A549 (cell line): ENCODE measurements at regions of chr5 and their contacts with region 1.

Region 1: GRCh38 chr5:141878711-141879425 is 658 bp upstream of the PCDH1 start:
- DNase-seq: peak; percentile 74 to 91
- ATAC-seq: peak; percentile 65 to 89
- H3K4me3 ChIP-seq: peak overlapping the region; percentile 64
- H3K27ac ChIP-seq: peak overlapping the region; percentile 41 to 83; a peak in 4 of 6 replicates
- H3K4me1 ChIP-seq: peaks cover 22% of the 10 kb centered on the region
- CTCF ChIP-seq: peak; percentile 97
- EP300 ChIP-seq: no peak
- POLR2A ChIP-seq: no peak
- RAD21 ChIP-seq: peak; percentile 94

Region 2: GRCh38 chr5:141691867-141692532 is 186.9 kb before region 1 on chr5:
- CTCF ChIA-PET with region 1: interaction called, 424 read pairs
- POLR2A ChIA-PET with region 1: no interaction called
- DNase-seq: peak; percentile 71 to 74
- ATAC-seq: peak; percentile 91 to 96
- H3K4me3 ChIP-seq: peak overlapping the region; percentile 38
- H3K27ac ChIP-seq: peak overlapping the region in 1 of 2 experiments; percentile 57; a peak in 2 of 6 replicates
- H3K4me1 ChIP-seq: peaks cover 2% of the 10 kb centered on the region; the same call in 1 of the 3 replicates
- CTCF ChIP-seq: peak; percentile 98
- EP300 ChIP-seq: no peak
- POLR2A ChIP-seq: no peak
- RAD21 ChIP-seq: peak; percentile 95 to 99

Region 3: DNA sequence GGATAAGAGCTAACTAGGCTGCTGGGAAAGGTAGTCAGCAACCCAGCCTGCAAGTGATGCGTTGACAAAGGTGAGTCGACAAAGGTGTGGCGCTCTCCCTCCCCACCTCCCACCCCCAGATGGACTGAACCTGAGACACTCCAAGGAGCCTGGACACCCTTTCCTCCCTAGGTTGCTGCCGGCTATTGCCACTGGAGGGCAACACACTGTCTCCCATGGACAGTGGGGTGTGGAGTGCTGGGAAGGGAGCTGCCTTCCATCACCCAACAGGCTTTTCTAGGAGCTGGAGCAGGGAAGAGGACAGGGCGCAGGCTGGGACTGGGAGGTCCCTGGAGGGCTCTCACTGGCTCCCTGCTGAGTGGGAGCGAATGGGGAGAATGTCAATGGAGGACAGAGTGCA is 121.5 kb before region 1 on chr5:
- CTCF ChIA-PET with region 1: interaction called, 92 read pairs
- POLR2A ChIA-PET with region 1: no interaction called
- DNase-seq: peak; percentile 54 to 72
- ATAC-seq: peak; percentile 71 to 91
- H3K4me3 ChIP-seq: no peak overlapping the region
- H3K27ac ChIP-seq: no peak overlapping the region
- H3K4me1 ChIP-seq: no peaks in the 10 kb centered on the region
- CTCF ChIP-seq: peak; percentile 35; the same call in 2 of the 3 replicates
- EP300 ChIP-seq: no peak
- POLR2A ChIP-seq: no peak
- RAD21 ChIP-seq: peak; percentile 48 to 63; a peak in 3 of 5 replicates

Region 4: DNA sequence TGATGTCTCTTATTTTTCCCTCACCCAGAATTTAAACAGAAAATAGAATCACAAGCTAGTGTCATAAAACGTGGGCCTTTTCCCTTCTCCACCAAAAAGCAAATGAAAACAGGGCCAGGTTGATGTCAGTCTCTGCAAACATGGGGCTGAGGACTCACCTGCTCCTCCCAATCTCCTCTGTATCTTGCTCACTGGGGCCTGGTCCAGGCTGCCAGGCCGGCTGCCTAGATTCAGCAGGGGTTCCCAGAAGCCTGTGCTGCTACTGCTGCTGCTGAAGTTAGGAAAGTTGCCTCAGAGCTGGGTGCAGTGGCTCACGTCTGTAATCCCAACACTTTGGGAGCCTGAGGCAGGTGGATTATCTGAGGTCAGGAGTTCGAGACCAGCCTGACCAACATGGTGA is 85.0 kb before region 1 on chr5:
- CTCF ChIA-PET with region 1: interaction called, 10 read pairs
- POLR2A ChIA-PET with region 1: no interaction called
- DNase-seq: no peak
- ATAC-seq: no peak
- H3K4me3 ChIP-seq: no peak overlapping the region
- H3K27ac ChIP-seq: no peak overlapping the region
- H3K4me1 ChIP-seq: no peaks in the 10 kb centered on the region
- CTCF ChIP-seq: no peak
- EP300 ChIP-seq: no peak
- POLR2A ChIP-seq: no peak
- RAD21 ChIP-seq: no peak

Region 5: DNA sequence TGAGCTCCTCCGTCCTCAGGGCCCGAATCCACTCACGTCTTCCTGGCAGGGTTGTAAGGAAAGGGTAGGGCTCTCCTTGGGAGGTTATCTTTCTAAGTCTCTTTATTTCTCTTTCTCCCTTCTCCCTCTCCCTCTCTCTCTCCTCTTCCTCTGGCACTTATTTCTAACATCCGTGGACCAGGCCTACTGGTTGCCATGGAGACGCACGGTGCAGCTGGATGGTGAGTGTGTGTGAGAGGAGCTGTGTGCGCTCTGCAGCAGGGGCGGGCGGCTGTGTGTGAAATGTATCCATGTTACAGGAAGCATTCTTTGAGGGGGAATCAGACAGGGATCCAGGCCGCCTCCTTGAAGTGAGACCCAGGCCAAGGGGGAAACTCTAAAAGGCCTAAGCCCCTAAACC is 32.8 kb before region 1 on chr5:
- CTCF ChIA-PET with region 1: interaction called, 24 read pairs
- POLR2A ChIA-PET with region 1: interaction called, 5 read pairs
- DNase-seq: no peak
- ATAC-seq: no peak
- H3K4me3 ChIP-seq: no peak overlapping the region
- H3K27ac ChIP-seq: no peak overlapping the region
- H3K4me1 ChIP-seq: peaks cover 30% of the 10 kb centered on the region
- CTCF ChIP-seq: no peak
- EP300 ChIP-seq: no peak
- POLR2A ChIP-seq: no peak
- RAD21 ChIP-seq: no peak

Region 6: DNA sequence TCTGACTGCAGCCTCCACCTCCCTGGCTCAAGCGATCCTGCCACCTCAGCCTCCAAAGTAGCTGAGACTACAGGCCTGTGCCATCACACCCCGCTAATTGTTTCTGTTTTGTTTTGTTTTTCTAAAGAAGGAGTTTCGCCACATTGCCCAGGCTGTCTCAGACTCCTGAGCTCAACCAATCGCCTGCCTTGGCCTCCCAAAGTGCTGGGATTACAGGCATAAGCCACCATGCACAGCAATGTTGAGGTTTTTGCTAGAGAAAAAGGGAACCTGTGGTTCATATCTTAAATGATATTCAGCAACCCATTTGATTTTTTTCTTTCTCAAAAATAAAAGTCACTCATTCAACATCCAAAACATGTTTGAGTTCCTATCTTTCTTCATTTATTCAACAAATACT is 24.4 kb after region 1 on chr5:
- CTCF ChIA-PET with region 1: interaction called, 54 read pairs
- POLR2A ChIA-PET with region 1: no interaction called
- DNase-seq: no peak
- ATAC-seq: no peak
- H3K4me3 ChIP-seq: no peak overlapping the region
- H3K27ac ChIP-seq: no peak overlapping the region
- H3K4me1 ChIP-seq: no peaks in the 10 kb centered on the region
- CTCF ChIP-seq: no peak
- EP300 ChIP-seq: no peak
- POLR2A ChIP-seq: no peak
- RAD21 ChIP-seq: no peak

Region 7: GRCh38 chr5:141960449-141961202 is 81.8 kb after region 1 on chr5:
- CTCF ChIA-PET with region 1: interaction called, 95 read pairs
- POLR2A ChIA-PET with region 1: no interaction called
- DNase-seq: peak; percentile 79 to 92
- ATAC-seq: peak; percentile 88 to 97
- H3K4me3 ChIP-seq: no peak overlapping the region
- H3K27ac ChIP-seq: peak overlapping the region; percentile 15 to 67; a peak in 5 of 6 replicates
- H3K4me1 ChIP-seq: 0 out of 3 replicates have a peak, but pooled peaks cover 4% of the 10 kb centered on the region
- CTCF ChIP-seq: peak; percentile 94
- EP300 ChIP-seq: no peak
- POLR2A ChIP-seq: no peak
- RAD21 ChIP-seq: peak; percentile 81 to 88

Region 8: GRCh38 chr5:142184988-142185387 is 306.1 kb after region 1 on chr5:
- CTCF ChIA-PET with region 1: no interaction called
- POLR2A ChIA-PET with region 1: no interaction called
- DNase-seq: no peak
- ATAC-seq: no peak
- H3K4me3 ChIP-seq: no peak overlapping the region
- H3K27ac ChIP-seq: no peak overlapping the region
- H3K4me1 ChIP-seq: no peaks in the 10 kb centered on the region
- CTCF ChIP-seq: no peak
- EP300 ChIP-seq: no peak
- POLR2A ChIP-seq: no peak
- RAD21 ChIP-seq: no peak

Region 9: GRCh38 chr5:142253938-142254337 is 375.1 kb after region 1 on chr5:
- CTCF ChIA-PET with region 1: no interaction called
- POLR2A ChIA-PET with region 1: no interaction called
- DNase-seq: no peak
- ATAC-seq: no peak
- H3K4me3 ChIP-seq: no peak overlapping the region
- H3K27ac ChIP-seq: no peak overlapping the region
- H3K4me1 ChIP-seq: no peaks in the 10 kb centered on the region
- CTCF ChIP-seq: no peak
- EP300 ChIP-seq: no peak
- POLR2A ChIP-seq: no peak
- RAD21 ChIP-seq: no peak